ENCODE measurements at regions of chr3 and their contacts with region 1.

Region 1: DNA sequence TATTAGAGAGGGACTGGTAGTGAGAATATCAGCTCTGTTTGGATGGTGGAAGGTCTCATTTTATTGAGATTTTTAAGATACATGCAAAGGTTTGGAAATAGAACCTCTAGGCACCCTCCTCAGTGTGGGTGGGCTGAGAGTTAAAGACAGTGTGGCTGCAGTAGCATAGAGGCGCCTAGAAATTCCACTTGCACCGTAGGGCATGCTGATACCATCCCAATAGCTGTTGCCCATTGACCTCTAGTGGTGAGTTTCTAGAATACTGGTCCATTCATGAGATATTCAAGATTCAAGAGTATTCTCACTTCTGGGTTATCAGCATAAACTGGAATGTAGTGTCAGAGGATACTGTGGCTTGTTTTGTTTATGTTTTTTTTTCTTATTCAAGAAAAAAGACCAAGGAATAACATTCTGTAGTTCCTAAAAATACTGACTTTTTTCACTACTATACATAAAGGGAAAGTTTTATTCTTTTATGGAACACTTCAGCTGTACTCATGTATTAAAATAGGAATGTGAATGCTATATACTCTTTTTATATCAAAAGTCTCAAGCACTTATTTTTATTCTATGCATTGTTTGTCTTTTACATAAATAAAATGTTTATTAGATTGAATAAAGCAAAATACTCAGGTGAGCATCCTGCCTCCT is 87.2 kb downstream of the TGFBR2 start:
- DNase-seq: peak in 5 of 7 donors; percentile 37 to 58 (median 55)
- H3K4me3 ChIP-seq: no peak overlapping the region
- H3K27ac ChIP-seq: no peak overlapping the region
- H3K4me1 ChIP-seq: peaks cover 27 to 58% of the 10 kb centered on the region in 2 donors
- H3K27me3 ChIP-seq: no peaks in the 10 kb centered on the region
- CTCF ChIP-seq: peak; percentile 61 to 90 (median 86)
- POLR2A ChIP-seq: no peak

Region 2: GRCh38 chr3:30511524-30512278 is 181.9 kb before region 1 on chr3:
- intact Hi-C with region 1: loop called in 1 of 2 experiments (anchors 10 kb)
- DNase-seq: peak in 6 of 7 donors; percentile 39 to 68 (median 52)
- H3K4me3 ChIP-seq: no peak overlapping the region
- H3K27ac ChIP-seq: peak overlapping the region in 3 of 5 donors; percentile 18 to 66 (median 44)
- H3K4me1 ChIP-seq: peaks cover 8 to 12% of the 10 kb centered on the region in 2 donors
- H3K27me3 ChIP-seq: no peaks in the 10 kb centered on the region
- CTCF ChIP-seq: no peak
- POLR2A ChIP-seq: no peak

Region 3: DNA sequence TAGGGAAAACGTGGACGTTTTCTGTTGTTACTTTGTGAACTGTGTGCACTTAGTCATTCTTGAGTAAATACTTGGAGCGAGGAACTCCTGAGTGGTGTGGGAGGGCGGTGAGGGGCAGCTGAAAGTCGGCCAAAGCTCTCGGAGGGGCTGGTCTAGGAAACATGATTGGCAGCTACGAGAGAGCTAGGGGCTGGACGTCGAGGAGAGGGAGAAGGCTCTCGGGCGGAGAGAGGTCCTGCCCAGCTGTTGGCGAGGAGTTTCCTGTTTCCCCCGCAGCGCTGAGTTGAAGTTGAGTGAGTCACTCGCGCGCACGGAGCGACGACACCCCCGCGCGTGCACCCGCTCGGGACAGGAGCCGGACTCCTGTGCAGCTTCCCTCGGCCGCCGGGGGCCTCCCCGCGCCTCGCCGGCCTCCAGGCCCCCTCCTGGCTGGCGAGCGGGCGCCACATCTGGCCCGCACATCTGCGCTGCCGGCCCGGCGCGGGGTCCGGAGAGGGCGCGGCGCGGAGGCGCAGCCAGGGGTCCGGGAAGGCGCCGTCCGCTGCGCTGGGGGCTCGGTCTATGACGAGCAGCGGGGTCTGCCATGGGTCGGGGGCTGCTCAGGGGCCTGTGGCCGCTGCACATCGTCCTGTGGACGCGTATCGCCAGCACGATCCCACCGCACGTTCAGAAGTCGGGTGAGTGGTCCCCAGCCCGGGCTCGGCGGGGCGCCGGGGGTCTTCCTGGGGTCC is 87.1 kb before region 1 on chr3 and contains the start of gene TGFBR2:
- intact Hi-C with region 1: loop called (anchors 5 to 10 kb)
- DNase-seq: peak; percentile 92 to 98 (median 96)
- H3K4me3 ChIP-seq: peak within 1 kb of the TSS; percentile 29 to 98 (median 76)
- H3K27ac ChIP-seq: peak within 1 kb of the TSS; percentile 91 to 98 (median 95)
- H3K4me1 ChIP-seq: peaks cover 22 to 40% of the 10 kb centered on the region in 2 donors
- H3K27me3 ChIP-seq: no peaks in the 10 kb centered on the region
- CTCF ChIP-seq: peak in 4 of 6 experiments; percentile 21 to 62 (median 37)
- POLR2A ChIP-seq: peak; percentile 60 to 92
- total RNA-seq, gene TGFBR2: 44.9 to 296 (median 166) TPM

Region 4: DNA sequence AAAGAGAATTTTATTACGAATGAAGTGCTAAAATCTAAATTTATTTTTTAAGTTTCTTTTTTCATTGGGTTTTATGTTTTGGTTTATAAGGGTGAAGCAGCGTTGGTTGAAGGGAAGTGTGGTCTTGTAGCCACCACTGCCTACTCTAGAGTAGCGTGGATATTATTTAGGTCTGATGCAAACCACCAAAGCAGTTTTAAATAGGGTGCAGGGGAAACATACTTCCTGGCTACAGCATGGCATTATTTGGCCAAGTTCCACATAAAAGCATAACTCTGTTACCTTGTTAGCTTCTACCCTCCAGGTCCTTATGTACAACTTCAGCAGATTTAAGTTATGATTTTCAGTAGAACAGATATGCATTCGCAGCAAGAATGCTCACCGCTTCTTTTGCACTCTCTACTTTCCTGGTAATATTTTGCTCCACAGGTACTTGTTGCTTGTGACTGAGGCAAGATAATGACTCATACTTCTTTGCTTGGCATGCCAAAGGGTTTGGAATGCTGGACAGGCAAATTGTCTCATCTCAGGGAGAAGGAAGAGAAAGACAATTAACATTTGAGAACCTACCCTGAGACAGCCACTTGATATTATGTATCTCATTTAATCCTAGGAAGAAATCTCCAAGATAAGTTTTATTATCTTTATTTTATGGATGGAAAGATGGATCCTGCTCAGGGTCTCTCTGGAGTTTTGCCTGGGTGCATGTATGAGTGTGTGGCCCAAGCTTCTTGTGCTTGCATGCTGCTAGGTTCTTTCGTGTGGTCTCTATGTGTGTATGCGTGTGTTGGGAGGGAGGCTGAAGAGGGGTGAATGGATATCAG is 81.8 kb before region 1 on chr3:
- intact Hi-C with region 1: loop called (anchors 5 to 10 kb)
- DNase-seq: no peak
- H3K4me3 ChIP-seq: peak overlapping the region in 1 of 4 donors; percentile 98
- H3K27ac ChIP-seq: peak overlapping the region in 4 of 5 donors; percentile 14 to 97 (median 54)
- H3K4me1 ChIP-seq: peaks cover 63 to 79% of the 10 kb centered on the region in 2 donors
- H3K27me3 ChIP-seq: no peaks in the 10 kb centered on the region
- CTCF ChIP-seq: no peak
- POLR2A ChIP-seq: peak in 1 of 2 donors; percentile 6